ENCODE measurements at regions of chr3 and their contacts with region 1.

Region 1: DNA sequence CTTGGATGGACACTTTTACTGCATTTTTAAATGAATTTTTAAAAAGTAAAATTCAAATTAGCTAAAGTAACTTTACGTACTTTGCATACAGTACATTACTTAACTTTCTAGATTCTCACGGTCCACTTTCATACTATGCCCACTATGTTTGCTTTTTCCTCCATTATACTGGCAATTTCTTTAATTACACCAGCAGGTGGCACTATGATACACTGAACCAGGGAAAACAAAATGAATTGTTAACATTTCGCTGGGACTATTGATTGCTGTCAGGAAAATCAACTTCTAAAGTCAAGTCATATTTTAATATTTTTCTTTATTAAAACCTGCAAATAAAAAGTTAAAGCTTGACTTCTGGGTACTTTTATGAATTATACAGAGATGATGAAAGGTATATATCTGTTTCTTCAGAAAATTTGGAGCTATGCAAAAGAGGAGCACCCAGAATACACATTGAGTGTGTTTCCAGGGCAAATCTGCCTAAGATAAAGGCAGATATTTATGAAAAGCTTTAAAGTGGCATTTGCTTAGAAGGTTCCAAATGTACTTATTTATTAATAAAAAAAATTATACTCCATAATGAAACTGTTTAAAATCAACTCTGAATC is 21.8 kb upstream of the POU1F1 start:
- DNase-seq: no peak
- H3K4me3 Mint-ChIP-seq: no peak overlapping the region
- H3K27ac Mint-ChIP-seq: no peak overlapping the region
- H3K4me1 Mint-ChIP-seq: no peaks in the 10 kb centered on the region
- H3K27me3 Mint-ChIP-seq: no peaks in the 10 kb centered on the region

Region 2: DNA sequence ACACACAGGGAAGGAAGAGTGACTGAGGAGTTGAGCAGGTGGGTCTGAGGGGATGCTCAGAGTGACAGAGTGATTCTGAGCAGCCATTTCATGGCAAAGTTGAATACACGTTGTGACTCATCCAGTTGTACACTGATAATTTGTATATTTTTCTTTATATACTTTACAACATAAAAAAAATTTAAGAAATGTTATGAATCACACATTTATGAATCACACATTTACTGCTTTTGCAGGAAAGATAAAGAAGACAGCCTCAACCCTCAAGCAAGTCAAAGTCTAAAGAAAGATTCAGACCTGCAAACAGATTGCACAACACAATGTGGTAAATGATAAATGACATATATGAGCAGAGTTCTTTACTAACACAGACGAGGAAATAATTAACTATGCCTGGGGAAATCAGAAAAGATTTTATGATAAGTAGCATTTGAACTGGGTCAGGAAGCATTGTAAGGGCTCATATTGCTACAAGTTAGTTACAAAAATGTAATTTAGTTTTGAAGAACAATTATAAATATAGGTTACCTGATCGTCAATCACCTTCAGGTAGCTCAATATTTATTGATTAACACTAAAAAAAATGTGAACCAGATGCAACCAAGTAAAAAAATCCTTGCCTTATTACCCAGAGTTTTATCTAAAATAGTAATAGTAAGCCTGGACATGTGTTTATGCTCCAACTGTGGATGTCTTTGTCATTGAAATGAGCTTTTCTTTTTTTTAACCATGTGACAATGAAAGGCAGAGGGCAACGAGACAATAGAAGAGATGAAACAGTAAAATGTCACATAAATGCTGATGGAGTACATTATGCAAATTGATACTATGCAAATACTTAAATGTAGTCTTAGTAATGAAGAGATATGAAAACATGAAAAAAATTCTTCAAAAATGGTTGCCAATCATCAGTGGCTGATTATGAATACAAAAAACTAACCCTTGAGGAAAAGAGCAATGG is 91.9 kb before region 1 on chr3:
- CTCF ChIA-PET with region 1: no interaction called
- intact Hi-C with region 1: no loop called
- DNase-seq: no peak
- H3K4me3 Mint-ChIP-seq: no peak overlapping the region
- H3K27ac Mint-ChIP-seq: no peak overlapping the region
- H3K4me1 Mint-ChIP-seq: no peaks in the 10 kb centered on the region
- H3K27me3 Mint-ChIP-seq: peaks cover 11% of the 10 kb centered on the region

Region 3: DNA sequence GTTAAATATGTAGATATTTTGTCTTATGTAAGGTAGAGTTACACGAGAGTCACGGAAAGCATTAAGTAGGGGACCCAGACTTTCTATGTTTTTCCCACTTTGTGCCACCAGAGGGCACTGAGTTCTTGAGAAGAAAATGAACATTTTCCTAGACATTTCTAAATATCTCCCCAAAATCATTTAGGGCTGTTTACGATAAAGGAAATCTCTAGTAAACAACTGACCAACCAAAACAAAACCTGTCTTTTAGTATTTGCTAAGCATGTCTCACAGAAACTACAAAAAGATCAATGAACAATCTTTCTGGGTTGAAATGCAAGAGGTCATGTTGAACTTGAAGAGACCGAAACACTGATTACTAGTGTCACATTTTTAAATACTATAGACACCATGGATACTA is 37.9 kb before region 1 on chr3:
- CTCF ChIA-PET with region 1: interaction called, 5 read pairs
- intact Hi-C with region 1: loop called (anchors 2 kb)
- DNase-seq: peak; percentile 66
- H3K4me3 Mint-ChIP-seq: no peak overlapping the region
- H3K27ac Mint-ChIP-seq: no peak overlapping the region
- H3K4me1 Mint-ChIP-seq: no peaks in the 10 kb centered on the region
- H3K27me3 Mint-ChIP-seq: no peaks in the 10 kb centered on the region

Region 4: DNA sequence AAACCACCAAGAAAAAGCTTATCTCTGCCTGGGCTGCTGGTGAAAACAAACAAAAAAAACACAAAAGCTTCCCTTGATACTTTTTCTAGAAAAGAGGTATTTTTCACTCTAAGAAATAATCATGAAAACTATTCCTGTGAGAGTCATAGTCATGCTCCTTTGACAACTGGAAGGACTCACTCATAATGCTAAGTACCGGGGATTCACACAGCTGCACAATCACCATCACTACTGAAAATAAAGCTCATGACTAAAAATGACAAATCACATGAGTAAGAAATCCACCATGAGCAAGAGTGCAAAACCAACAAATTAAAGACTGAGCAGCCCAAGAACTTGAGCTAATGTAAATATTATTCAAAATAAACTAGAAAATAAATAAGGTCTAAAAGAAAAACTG is 11.2 kb before region 1 on chr3:
- CTCF ChIA-PET with region 1: interaction called, 12 read pairs
- intact Hi-C with region 1: no loop called
- DNase-seq: no peak
- H3K4me3 Mint-ChIP-seq: no peak overlapping the region
- H3K27ac Mint-ChIP-seq: no peak overlapping the region
- H3K4me1 Mint-ChIP-seq: peaks cover 4% of the 10 kb centered on the region
- H3K27me3 Mint-ChIP-seq: no peaks in the 10 kb centered on the region

Region 5: GRCh38 chr3:87318617-87319021 is 20.4 kb after region 1 on chr3:
- CTCF ChIA-PET with region 1: no interaction called
- intact Hi-C with region 1: no loop called
- DNase-seq: no peak
- H3K4me3 Mint-ChIP-seq: no peak overlapping the region
- H3K27ac Mint-ChIP-seq: no peak overlapping the region
- H3K4me1 Mint-ChIP-seq: peaks cover under 1% of the 10 kb centered on the region
- H3K27me3 Mint-ChIP-seq: peaks cover 12% of the 10 kb centered on the region

Region 6: GRCh38 chr3:87503900-87504508 is 205.8 kb after region 1 on chr3:
- CTCF ChIA-PET with region 1: interaction called, 9 read pairs
- intact Hi-C with region 1: loop called (anchors 1 kb)
- DNase-seq: peak; percentile 22
- H3K4me3 Mint-ChIP-seq: no peak overlapping the region
- H3K27ac Mint-ChIP-seq: no peak overlapping the region
- H3K4me1 Mint-ChIP-seq: no peaks in the 10 kb centered on the region
- H3K27me3 Mint-ChIP-seq: no peaks in the 10 kb centered on the region

Region 7: GRCh38 chr3:87771341-87772192 is 473.4 kb after region 1 on chr3:
- CTCF ChIA-PET with region 1: interaction called, 3 read pairs
- intact Hi-C with region 1: loop called (anchors 5 kb)
- DNase-seq: peak; percentile 56
- H3K4me3 Mint-ChIP-seq: no peak overlapping the region
- H3K27ac Mint-ChIP-seq: no peak overlapping the region
- H3K4me1 Mint-ChIP-seq: no peaks in the 10 kb centered on the region
- H3K27me3 Mint-ChIP-seq: peaks cover 17% of the 10 kb centered on the region

Region 8: GRCh38 chr3:88180398-88180999 is 882.3 kb after region 1 on chr3:
- CTCF ChIA-PET with region 1: no interaction called
- intact Hi-C with region 1: loop called (anchors 1 kb)
- DNase-seq: peak; percentile 62
- H3K4me3 Mint-ChIP-seq: no peak overlapping the region
- H3K27ac Mint-ChIP-seq: no peak overlapping the region
- H3K4me1 Mint-ChIP-seq: no peaks in the 10 kb centered on the region
- H3K27me3 Mint-ChIP-seq: no peaks in the 10 kb centered on the region

Measured in activated naive CD4-positive, alpha-beta T cell treated with anti-CD3 and anti-CD28 coated beads for 36 hours (primary cell).